Breast epithelium (tissue), 4 donors: ENCODE measurements at regions of chr20 and their contacts with region 1.

Region 1: GRCh38 chr20:63703255-63704061 is 4.3 kb downstream of the ARFRP1 start:
- DNase-seq: no peak
- H3K4me3 ChIP-seq: no peak overlapping the region
- H3K27ac ChIP-seq: no peak overlapping the region
- H3K4me1 ChIP-seq: peaks cover 10 to 13% of the 10 kb centered on the region in 2 donors
- H3K27me3 ChIP-seq: no peaks in the 10 kb centered on the region
- CTCF ChIP-seq: no peak
- POLR2A ChIP-seq: no peak

Region 2: GRCh38 chr20:63714858-63715257 is 11.4 kb after region 1 on chr20:
- intact Hi-C with region 1: loop called (anchors 2 kb)
- DNase-seq: no peak
- H3K4me3 ChIP-seq: no peak overlapping the region
- H3K27ac ChIP-seq: no peak overlapping the region
- H3K4me1 ChIP-seq: no peaks in the 10 kb centered on the region
- H3K27me3 ChIP-seq: no peaks in the 10 kb centered on the region
- CTCF ChIP-seq: no peak
- POLR2A ChIP-seq: no peak